Mammary epithelial cell (primary cell): ENCODE measurements at regions of chr9 and their contacts with region 1.

Region 1: GRCh38 chr9:121876658-121877271 is 216.3 kb downstream of the TTLL11 start:
- DNase-seq: no peak
- H3K4me3 ChIP-seq: no peak overlapping the region
- H3K27ac ChIP-seq: no peak overlapping the region
- H3K4me1 ChIP-seq: no peaks in the 10 kb centered on the region
- H3K27me3 ChIP-seq: no peaks in the 10 kb centered on the region
- CTCF ChIP-seq: no peak

Region 2: DNA sequence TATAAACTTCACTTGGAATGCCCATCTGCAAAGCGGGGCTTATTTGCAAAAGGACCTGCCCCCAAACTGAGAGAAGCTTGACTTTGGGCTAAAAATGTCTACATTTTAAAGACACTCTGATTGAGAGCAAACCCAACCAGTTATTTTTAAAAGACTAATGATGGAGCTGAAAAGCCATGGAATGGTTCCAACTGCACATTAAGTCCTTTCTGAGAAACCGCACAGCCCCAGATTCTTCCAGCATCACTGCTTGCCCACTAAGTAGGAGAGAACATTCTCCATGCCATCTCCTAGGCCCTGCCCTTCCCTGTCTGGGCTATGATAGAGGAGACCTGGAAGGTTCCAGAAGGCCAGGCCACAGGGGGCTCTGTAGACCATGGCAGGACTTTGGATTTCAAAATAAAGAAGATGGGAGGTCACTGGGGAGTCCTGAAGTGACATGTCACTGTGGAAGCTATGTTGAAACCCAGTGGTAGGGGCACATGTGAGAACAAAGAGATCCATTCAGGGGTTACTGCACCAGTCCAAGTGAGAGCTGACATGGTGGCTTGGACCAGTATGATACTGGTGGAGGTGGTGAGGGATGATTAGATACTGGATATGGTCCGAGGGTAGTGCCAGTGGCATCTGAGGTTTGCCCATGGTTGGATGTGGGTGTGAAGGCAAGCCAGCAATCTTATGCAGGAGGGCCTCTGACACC is 46.2 kb before region 1 on chr9:
- CTCF ChIA-PET with region 1: no interaction called
- dilution Hi-C with region 1: loop called (anchors 5 kb)
- in situ Hi-C with region 1: no loop called
- intact Hi-C with region 1: no loop called
- DNase-seq: no peak
- H3K4me3 ChIP-seq: no peak overlapping the region
- H3K27ac ChIP-seq: no peak overlapping the region
- H3K4me1 ChIP-seq: no peaks in the 10 kb centered on the region
- H3K27me3 ChIP-seq: no peaks in the 10 kb centered on the region
- CTCF ChIP-seq: no peak

Region 3: GRCh38 chr9:121976751-121977150 is 100.0 kb after region 1 on chr9:
- CTCF ChIA-PET with region 1: no interaction called
- dilution Hi-C with region 1: loop called (anchors 5 kb)
- in situ Hi-C with region 1: no loop called
- intact Hi-C with region 1: no loop called
- DNase-seq: peak; percentile 70
- H3K4me3 ChIP-seq: no peak overlapping the region
- H3K27ac ChIP-seq: no peak overlapping the region
- H3K4me1 ChIP-seq: peaks cover 22% of the 10 kb centered on the region
- H3K27me3 ChIP-seq: no peaks in the 10 kb centered on the region
- CTCF ChIP-seq: no peak